AG04449 (cell line): ENCODE measurements at regions of chr5 and their contacts with region 1.

Region 1: GRCh38 chr5:73215891-73216610 is 43.1 kb downstream of the TMEM174 start:
- DNase-seq: no peak
- H3K4me3 ChIP-seq: peak overlapping the region; percentile 59
- CTCF ChIP-seq: peak; percentile 92

Region 2: DNA sequence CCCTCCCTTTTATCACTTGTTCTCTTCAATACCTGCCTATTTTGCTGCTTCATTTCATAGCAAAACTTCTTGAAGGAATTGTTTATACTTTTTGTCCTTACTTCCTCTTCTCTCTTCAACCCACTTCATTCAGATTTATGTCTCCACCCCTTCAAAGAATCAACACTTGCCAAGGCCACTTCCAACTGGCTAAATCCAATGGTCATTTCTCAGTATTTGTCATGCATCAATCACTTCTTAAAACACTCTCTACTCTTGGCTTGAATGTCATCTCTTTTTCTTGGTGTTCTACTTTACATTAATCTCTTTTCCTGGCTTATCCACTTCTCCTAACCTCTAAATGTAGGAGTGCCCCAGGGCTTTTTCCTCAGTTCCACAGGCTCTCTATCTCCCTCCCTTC is 268.6 kb before region 1 on chr5:
- CTCF ChIA-PET with region 1: no interaction called
- POLR2A ChIA-PET with region 1: no interaction called
- DNase-seq: no peak
- H3K4me3 ChIP-seq: no peak overlapping the region
- CTCF ChIP-seq: no peak

Region 3: GRCh38 chr5:73081093-73081492 is 135.0 kb before region 1 on chr5:
- CTCF ChIA-PET with region 1: interaction called, 48 read pairs
- POLR2A ChIA-PET with region 1: no interaction called
- DNase-seq: no peak
- H3K4me3 ChIP-seq: no peak overlapping the region
- CTCF ChIP-seq: no peak

Region 4: GRCh38 chr5:73120222-73121118 is 95.6 kb before region 1 on chr5 and contains the start of gene TMEM171:
- CTCF ChIA-PET with region 1: interaction called, 30 read pairs
- POLR2A ChIA-PET with region 1: interaction called, 5 read pairs
- DNase-seq: no peak
- H3K4me3 ChIP-seq: peak within 1 kb of the TSS; percentile 68
- CTCF ChIP-seq: no peak

Region 5: DNA sequence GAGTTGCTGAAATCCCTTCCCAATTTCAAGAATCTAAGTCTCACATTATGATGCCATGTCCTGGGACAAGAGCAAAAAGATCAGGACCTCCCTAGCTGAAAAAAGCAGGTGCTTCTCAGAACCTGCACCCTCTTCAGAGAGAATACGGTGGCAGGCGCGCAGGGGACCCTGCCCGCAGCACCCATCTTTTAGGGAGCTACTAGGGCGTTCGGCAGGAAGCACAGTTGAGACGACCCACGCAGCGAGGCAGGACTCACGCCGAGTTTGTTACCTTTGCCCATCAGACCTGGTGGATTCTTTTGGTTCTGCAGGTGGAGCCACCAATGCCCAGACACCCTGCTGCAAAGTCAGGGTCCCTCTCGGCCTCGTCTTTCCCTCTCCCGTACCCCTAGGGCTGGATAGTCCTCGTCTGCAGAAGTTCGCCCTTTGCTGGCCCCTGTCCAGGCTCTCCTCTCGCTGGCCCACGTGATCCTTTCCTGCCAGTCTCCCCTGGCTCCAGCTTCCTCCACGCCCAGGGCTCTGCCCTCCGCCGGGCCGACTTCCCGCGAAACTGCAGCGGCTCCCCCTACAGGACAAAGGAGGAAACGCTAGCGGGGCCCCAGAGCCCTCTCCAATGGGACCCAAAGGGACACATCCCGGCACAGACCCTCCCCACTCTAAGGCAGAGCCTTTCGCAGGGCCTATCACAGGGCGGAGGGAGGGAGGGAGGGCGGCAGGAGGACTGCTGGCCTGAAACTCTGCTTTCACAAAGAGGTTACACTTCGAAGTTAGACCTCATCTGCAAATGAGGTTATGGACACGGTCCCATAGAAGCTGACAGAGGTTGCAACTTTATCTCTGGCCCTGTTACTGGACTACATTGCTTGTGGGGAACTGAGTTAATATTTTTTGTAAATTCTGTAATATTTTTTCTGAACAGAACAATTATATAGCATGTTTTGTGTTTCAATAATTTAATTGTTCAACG is 14.2 kb before region 1 on chr5:
- CTCF ChIA-PET with region 1: interaction called, 142 read pairs
- POLR2A ChIA-PET with region 1: no interaction called
- DNase-seq: no peak
- H3K4me3 ChIP-seq: peak overlapping the region; percentile 8; the same call in 1 of the 2 replicates
- CTCF ChIP-seq: peak; percentile 91

Region 6: GRCh38 chr5:73274866-73275663 is 59.0 kb after region 1 on chr5:
- CTCF ChIA-PET with region 1: interaction called, 21 read pairs
- POLR2A ChIA-PET with region 1: no interaction called
- DNase-seq: no peak
- H3K4me3 ChIP-seq: no peak overlapping the region
- CTCF ChIP-seq: no peak

Region 7: DNA sequence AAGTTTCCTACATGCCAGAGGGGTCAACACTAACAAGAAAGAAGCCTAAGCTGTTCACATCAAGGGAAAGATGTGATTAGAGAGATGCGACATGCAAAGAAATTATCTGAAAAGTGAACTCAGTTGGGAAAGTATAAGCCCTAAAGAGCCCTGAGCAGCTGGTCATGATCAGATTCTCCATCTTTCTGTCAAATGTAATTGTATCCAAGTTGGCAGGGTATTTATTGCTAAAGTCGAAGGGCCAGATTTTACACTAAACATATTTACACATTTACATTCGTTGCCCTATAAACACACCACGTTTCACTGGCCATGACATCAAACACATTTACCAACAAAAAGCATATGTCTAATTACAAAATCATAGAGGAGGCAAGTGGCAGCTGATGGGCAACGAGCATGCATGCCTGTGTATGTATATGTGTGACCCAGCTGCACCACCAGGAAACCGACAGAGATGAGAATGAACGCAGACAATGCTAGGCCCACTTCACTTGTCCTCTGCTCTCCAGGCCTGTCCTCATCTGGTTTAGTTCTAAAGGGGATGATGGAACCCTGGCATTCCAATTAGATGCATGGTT is 226.3 kb after region 1 on chr5:
- CTCF ChIA-PET with region 1: interaction called, 69 read pairs
- POLR2A ChIA-PET with region 1: interaction called, 12 read pairs
- DNase-seq: no peak
- H3K4me3 ChIP-seq: no peak overlapping the region
- CTCF ChIP-seq: no peak